ENCODE measurements at regions of chr6 and their contacts with region 1.

Region 1: GRCh38 chr6:136792410-136793262 is at the start of gene MAP3K5:
- DNase-seq: no peak
- ATAC-seq: peak; percentile 76
- H3K4me3 ChIP-seq: peak within 1 kb of the TSS; percentile 71
- H3K27ac ChIP-seq: peak within 1 kb of the TSS; percentile 98
- H3K4me1 ChIP-seq: peaks cover 6% of the 10 kb centered on the region
- H3K27me3 ChIP-seq: no peaks in the 10 kb centered on the region
- CTCF ChIP-seq: peak; percentile 79 to 91 (median 84)
- EP300 ChIP-seq: peak in 1 of 2 experiments; percentile 4; a peak in 1 of 4 replicates
- POLR2A ChIP-seq: peak; percentile 87
- RAD21 ChIP-seq: peak; percentile 98
- polyA plus RNA-seq, gene MAP3K5: 5.4 to 11.1 TPM

Region 2: GRCh38 chr6:136607932-136608772 is 184.5 kb before region 1 on chr6:
- CTCF ChIA-PET with region 1: interaction called, 11 read pairs
- POLR2A ChIA-PET with region 1: interaction called, 3 read pairs
- RAD21 ChIA-PET with region 1: interaction called, 7 read pairs
- SMC1A ChIA-PET with region 1: interaction called, 4 read pairs
- in situ Hi-C with region 1: no loop called
- intact Hi-C with region 1: loop called (anchors 1 kb)
- DNase-seq: peak; percentile 17
- ATAC-seq: peak; percentile 96
- H3K4me3 ChIP-seq: no peak overlapping the region
- H3K27ac ChIP-seq: no peak overlapping the region
- H3K4me1 ChIP-seq: no peaks in the 10 kb centered on the region
- H3K27me3 ChIP-seq: no peaks in the 10 kb centered on the region
- CTCF ChIP-seq: peak; percentile 68 to 90 (median 90)
- EP300 ChIP-seq: no peak
- POLR2A ChIP-seq: no peak
- RAD21 ChIP-seq: peak; percentile 72

Region 3: DNA sequence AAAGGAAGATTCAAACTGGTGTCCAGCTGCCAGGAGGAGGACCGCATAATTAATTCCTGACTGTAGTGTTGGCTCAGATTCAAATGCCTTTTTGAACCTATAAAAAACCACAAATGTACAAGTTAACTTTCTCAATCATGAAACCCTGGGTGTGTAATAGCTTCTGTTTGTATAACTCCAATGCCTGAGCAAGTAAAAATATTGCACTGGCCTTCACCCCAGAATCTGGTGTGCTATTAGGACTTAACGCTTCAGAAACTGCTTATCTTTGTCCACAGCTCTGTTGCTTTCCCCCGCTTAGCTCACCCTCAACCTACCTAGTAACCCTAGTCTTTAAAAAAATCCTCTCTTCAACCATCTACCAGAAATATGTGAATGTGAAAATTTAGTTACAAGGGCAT is 123.3 kb before region 1 on chr6:
- CTCF ChIA-PET with region 1: interaction called, 12 read pairs
- POLR2A ChIA-PET with region 1: no interaction called
- RAD21 ChIA-PET with region 1: interaction called, 16 read pairs
- SMC1A ChIA-PET with region 1: interaction called, 8 read pairs
- in situ Hi-C with region 1: no loop called
- intact Hi-C with region 1: no loop called
- DNase-seq: no peak
- ATAC-seq: no peak
- H3K4me3 ChIP-seq: no peak overlapping the region
- H3K27ac ChIP-seq: no peak overlapping the region
- H3K4me1 ChIP-seq: no peaks in the 10 kb centered on the region
- H3K27me3 ChIP-seq: no peaks in the 10 kb centered on the region
- CTCF ChIP-seq: no peak
- EP300 ChIP-seq: no peak
- POLR2A ChIP-seq: no peak
- RAD21 ChIP-seq: no peak

Region 4: GRCh38 chr6:136706420-136706819 is 86.2 kb before region 1 on chr6:
- CTCF ChIA-PET with region 1: interaction called, 16 read pairs
- POLR2A ChIA-PET with region 1: interaction called, 5 read pairs
- RAD21 ChIA-PET with region 1: interaction called, 405 read pairs
- SMC1A ChIA-PET with region 1: interaction called, 8 read pairs
- in situ Hi-C with region 1: no loop called
- intact Hi-C with region 1: no loop called
- DNase-seq: no peak
- ATAC-seq: no peak
- H3K4me3 ChIP-seq: no peak overlapping the region
- H3K27ac ChIP-seq: no peak overlapping the region
- H3K4me1 ChIP-seq: no peaks in the 10 kb centered on the region
- H3K27me3 ChIP-seq: no peaks in the 10 kb centered on the region
- CTCF ChIP-seq: no peak
- EP300 ChIP-seq: no peak
- POLR2A ChIP-seq: no peak
- RAD21 ChIP-seq: no peak

Region 5: DNA sequence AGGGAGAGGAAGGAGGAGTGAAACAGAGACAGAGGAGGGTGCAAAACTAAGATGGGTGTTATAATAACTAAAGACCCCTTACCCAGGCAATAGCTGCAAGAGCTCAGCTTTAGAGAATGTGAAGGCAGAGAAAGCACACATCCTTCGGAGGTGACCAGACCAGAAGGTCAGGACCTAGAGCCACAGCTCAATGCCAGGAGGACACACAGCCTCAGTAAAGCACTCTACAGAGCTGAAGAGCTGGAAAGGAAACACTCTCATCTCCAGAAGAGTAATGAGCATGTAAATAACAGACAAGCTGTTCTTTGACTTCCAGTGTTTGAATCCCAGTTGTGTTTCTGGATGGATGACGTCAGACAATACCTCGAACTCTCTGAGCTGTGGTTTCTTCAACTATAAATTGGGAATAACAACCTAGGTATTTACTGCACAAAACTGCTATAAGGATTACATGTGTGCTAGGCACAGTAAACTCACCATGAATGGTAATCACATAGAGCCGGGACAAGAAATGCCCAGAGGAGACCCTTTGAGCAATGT is 63.6 kb before region 1 on chr6:
- CTCF ChIA-PET with region 1: interaction called, 11 read pairs
- POLR2A ChIA-PET with region 1: interaction called, 265 read pairs
- RAD21 ChIA-PET with region 1: interaction called, 405 read pairs
- SMC1A ChIA-PET with region 1: interaction called, 446 read pairs
- in situ Hi-C with region 1: no loop called
- intact Hi-C with region 1: no loop called
- DNase-seq: no peak
- ATAC-seq: no peak
- H3K4me3 ChIP-seq: no peak overlapping the region
- H3K27ac ChIP-seq: no peak overlapping the region
- H3K4me1 ChIP-seq: peaks cover 25% of the 10 kb centered on the region
- H3K27me3 ChIP-seq: no peaks in the 10 kb centered on the region
- CTCF ChIP-seq: no peak
- EP300 ChIP-seq: no peak
- POLR2A ChIP-seq: no peak
- RAD21 ChIP-seq: no peak

Region 6: GRCh38 chr6:136751522-136751956 is 41.1 kb before region 1 on chr6:
- CTCF ChIA-PET with region 1: interaction called, 14 read pairs
- POLR2A ChIA-PET with region 1: interaction called, 11 read pairs
- RAD21 ChIA-PET with region 1: interaction called, 54 read pairs
- SMC1A ChIA-PET with region 1: interaction called, 23 read pairs
- in situ Hi-C with region 1: no loop called
- intact Hi-C with region 1: loop called (anchors 1 kb)
- DNase-seq: peak; percentile 94
- ATAC-seq: peak; percentile 93
- H3K4me3 ChIP-seq: peak overlapping the region; percentile 31; the same call in 1 of the 2 replicates
- H3K27ac ChIP-seq: peak overlapping the region; percentile 93
- H3K4me1 ChIP-seq: peaks cover 48% of the 10 kb centered on the region
- H3K27me3 ChIP-seq: no peaks in the 10 kb centered on the region
- CTCF ChIP-seq: no peak
- EP300 ChIP-seq: peak; percentile 21 to 70; a peak in 3 of 4 replicates
- POLR2A ChIP-seq: no peak
- RAD21 ChIP-seq: 0 out of 2 replicates have a peak, but pooled peaks have one; percentile 28

Region 7: GRCh38 chr6:137351890-137352289 is 559.3 kb after region 1 on chr6:
- CTCF ChIA-PET with region 1: no interaction called
- POLR2A ChIA-PET with region 1: no interaction called
- RAD21 ChIA-PET with region 1: no interaction called
- SMC1A ChIA-PET with region 1: no interaction called
- in situ Hi-C with region 1: no loop called
- intact Hi-C with region 1: no loop called
- DNase-seq: no peak
- ATAC-seq: no peak
- H3K4me3 ChIP-seq: no peak overlapping the region
- H3K27ac ChIP-seq: no peak overlapping the region
- H3K4me1 ChIP-seq: no peaks in the 10 kb centered on the region
- H3K27me3 ChIP-seq: no peaks in the 10 kb centered on the region
- CTCF ChIP-seq: no peak
- EP300 ChIP-seq: no peak
- POLR2A ChIP-seq: no peak
- RAD21 ChIP-seq: no peak